ENCODE measurements at regions of chr10 and their contacts with region 1.

Region 1: GRCh38 chr10:13659897-13660550 is 73.3 kb downstream of the PRPF18 start:
- DNase-seq: peak; percentile 59
- H3K4me3 ChIP-seq: no peak overlapping the region
- H3K27ac ChIP-seq: peak overlapping the region; percentile 16
- H3K4me1 ChIP-seq: peaks cover 13% of the 10 kb centered on the region
- H3K27me3 ChIP-seq: no peaks in the 10 kb centered on the region
- CTCF ChIP-seq: peak; percentile 78 to 81
- POLR2A ChIP-seq: no peak

Region 2: DNA sequence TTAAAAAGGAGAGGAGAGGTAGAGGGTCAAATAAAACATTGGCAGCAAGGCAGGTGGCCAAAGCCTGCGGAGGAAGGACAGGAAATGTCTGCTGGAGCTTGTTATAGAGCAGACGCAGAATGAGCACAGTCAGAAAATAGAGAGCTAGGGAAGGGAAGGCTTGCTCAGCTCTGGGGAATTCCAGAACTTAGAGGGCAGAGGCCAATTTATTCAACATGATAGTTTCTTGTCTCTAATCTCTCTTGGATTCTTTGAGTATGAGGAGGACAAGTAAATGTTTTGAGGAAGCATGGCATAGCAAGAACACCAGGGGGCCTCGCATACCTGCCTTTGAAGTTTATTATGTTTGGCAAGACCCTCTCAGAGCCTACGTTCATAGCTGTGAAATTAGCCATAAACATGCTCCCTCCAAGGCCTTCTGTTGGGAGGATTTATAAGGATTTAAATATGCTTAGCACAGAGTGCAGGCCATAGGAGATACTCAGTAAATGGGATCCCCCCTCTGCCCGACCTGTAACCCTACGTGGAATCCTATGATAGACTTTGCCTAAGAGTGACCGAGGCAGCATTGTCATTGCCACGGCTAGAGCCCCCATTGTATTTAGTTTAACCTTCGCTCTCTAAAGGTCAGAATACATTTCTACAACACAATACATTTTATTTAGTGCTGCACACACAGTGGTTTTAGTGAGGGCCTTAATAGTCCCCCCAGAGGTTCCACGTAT is 952.4 kb before region 1 on chr10:
- CTCF ChIA-PET with region 1: no interaction called
- POLR2A ChIA-PET with region 1: no interaction called
- dilution Hi-C with region 1: no loop called
- intact Hi-C with region 1: no loop called
- DNase-seq: peak; percentile 99
- H3K4me3 ChIP-seq: no peak overlapping the region
- H3K27ac ChIP-seq: peak overlapping the region; percentile 85
- H3K4me1 ChIP-seq: peaks cover 63% of the 10 kb centered on the region
- H3K27me3 ChIP-seq: no peaks in the 10 kb centered on the region
- CTCF ChIP-seq: peak; percentile 66 to 71
- POLR2A ChIP-seq: peak; percentile 30

Region 3: GRCh38 chr10:13139150-13139549 is 520.9 kb before region 1 on chr10:
- CTCF ChIA-PET with region 1: no interaction called
- POLR2A ChIA-PET with region 1: no interaction called
- dilution Hi-C with region 1: no loop called
- intact Hi-C with region 1: no loop called
- DNase-seq: no peak
- H3K4me3 ChIP-seq: no peak overlapping the region
- H3K27ac ChIP-seq: no peak overlapping the region
- H3K4me1 ChIP-seq: no peaks in the 10 kb centered on the region
- H3K27me3 ChIP-seq: no peaks in the 10 kb centered on the region
- CTCF ChIP-seq: no peak
- POLR2A ChIP-seq: no peak

Region 4: DNA sequence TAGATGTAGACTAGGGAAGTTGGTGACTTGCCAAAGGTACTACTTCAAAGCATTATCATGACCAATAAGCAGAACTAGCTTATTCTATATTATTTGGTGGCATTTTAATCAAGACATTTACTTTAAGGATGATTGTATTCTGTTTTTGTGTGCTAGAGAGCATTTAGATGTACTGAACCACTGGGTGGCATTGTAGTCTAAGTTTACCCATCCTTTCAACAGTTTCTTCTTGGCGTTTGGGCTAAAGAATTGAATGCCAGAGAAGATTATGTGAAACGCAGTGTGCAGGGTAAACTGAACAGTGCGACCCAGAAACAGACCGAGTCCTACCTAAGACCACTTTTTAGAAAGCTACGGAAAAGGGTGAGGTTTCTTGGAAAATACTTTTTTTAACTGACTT is 46.5 kb before region 1 on chr10:
- CTCF ChIA-PET with region 1: interaction called, 3 read pairs
- POLR2A ChIA-PET with region 1: no interaction called
- dilution Hi-C with region 1: no loop called
- intact Hi-C with region 1: loop called (anchors 2 kb)
- DNase-seq: peak; percentile 60
- H3K4me3 ChIP-seq: no peak overlapping the region
- H3K27ac ChIP-seq: no peak overlapping the region
- H3K4me1 ChIP-seq: peaks cover 2% of the 10 kb centered on the region
- H3K27me3 ChIP-seq: no peaks in the 10 kb centered on the region
- CTCF ChIP-seq: peak; percentile 20 to 27
- POLR2A ChIP-seq: no peak

Region 5: GRCh38 chr10:13684252-13684791 is 24.3 kb after region 1 on chr10:
- CTCF ChIA-PET with region 1: interaction called, 7 read pairs
- POLR2A ChIA-PET with region 1: interaction called, 3 read pairs
- dilution Hi-C with region 1: no loop called
- intact Hi-C with region 1: loop called (anchors 1 kb)
- DNase-seq: peak; percentile 93
- H3K4me3 ChIP-seq: no peak overlapping the region
- H3K27ac ChIP-seq: peak overlapping the region; percentile 100
- H3K4me1 ChIP-seq: peaks cover 47% of the 10 kb centered on the region
- H3K27me3 ChIP-seq: no peaks in the 10 kb centered on the region
- CTCF ChIP-seq: no peak
- POLR2A ChIP-seq: no peak

Region 6: DNA sequence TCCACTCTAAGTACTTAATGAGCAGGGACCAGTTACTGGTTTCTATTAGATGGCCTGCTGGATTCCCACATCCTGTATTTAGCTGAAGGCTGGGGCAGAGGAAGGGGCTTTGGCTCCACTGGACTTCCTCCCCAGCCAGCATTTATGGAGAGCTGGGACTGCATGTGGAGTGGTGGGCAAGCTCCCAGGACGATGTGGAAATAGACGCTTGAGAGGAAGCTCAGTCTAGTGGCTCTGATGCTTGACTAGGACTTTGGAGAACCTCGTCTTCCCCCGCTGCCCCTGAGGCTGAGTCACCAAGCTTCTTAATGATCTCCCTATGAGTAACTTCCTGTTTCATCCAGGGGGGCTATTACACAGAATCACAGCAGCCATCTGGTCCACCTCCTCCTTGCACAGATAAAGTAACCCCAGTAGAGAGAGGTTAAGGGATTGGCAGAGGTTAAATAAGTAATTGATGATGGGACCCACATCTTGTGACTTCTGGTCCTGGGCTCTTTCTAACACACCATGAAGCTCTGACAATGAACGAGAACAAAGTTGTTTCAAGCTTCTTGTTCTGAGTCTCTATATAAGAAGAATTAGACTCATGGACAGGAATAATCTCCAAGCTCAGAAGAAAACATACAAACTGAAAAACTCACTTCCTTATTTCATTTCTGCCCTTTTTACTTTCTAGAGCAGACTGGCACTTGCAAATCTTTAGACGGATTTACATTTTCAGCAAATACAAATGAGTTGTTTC is 53.0 kb after region 1 on chr10:
- CTCF ChIA-PET with region 1: interaction called, 7 read pairs
- POLR2A ChIA-PET with region 1: no interaction called
- dilution Hi-C with region 1: no loop called
- intact Hi-C with region 1: loop called (anchors 2 kb)
- DNase-seq: peak; percentile 96
- H3K4me3 ChIP-seq: no peak overlapping the region
- H3K27ac ChIP-seq: peak overlapping the region; percentile 92
- H3K4me1 ChIP-seq: peaks cover 43% of the 10 kb centered on the region
- H3K27me3 ChIP-seq: no peaks in the 10 kb centered on the region
- CTCF ChIP-seq: no peak
- POLR2A ChIP-seq: peak; percentile 65

Region 7: GRCh38 chr10:13758312-13758711 is 98.3 kb after region 1 on chr10:
- CTCF ChIA-PET with region 1: interaction called, 4 read pairs
- POLR2A ChIA-PET with region 1: no interaction called
- dilution Hi-C with region 1: no loop called
- intact Hi-C with region 1: loop called (anchors 5 kb)
- DNase-seq: peak; percentile 77
- H3K4me3 ChIP-seq: no peak overlapping the region
- H3K27ac ChIP-seq: peak overlapping the region; percentile 85
- H3K4me1 ChIP-seq: peaks cover 36% of the 10 kb centered on the region
- H3K27me3 ChIP-seq: no peaks in the 10 kb centered on the region
- CTCF ChIP-seq: no peak
- POLR2A ChIP-seq: no peak

Region 8: DNA sequence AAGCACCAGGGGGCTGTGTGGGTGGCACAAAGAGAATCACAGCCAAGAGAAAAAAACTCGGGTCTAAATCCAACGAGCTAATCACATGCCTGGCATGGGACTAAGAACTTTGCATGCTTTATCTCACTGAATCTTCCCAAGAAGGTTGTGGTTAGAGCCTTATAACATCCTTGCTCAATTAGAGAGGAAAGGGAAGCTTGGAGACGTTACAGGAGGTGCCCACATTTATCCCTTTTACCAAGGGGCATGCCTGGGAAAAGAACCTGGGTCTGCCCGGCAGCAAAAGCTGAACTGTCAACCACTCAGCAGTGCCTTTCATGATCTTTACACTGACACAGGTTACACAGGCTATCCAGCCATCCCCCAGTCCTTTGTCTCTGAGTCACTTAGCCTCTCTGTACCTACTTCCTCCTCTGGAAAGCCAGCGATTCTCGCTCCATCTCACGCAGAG is 116.9 kb after region 1 on chr10:
- CTCF ChIA-PET with region 1: interaction called, 27 read pairs
- POLR2A ChIA-PET with region 1: no interaction called
- dilution Hi-C with region 1: no loop called
- intact Hi-C with region 1: loop called (anchors 1 kb)
- DNase-seq: no peak
- H3K4me3 ChIP-seq: no peak overlapping the region
- H3K27ac ChIP-seq: peak overlapping the region; percentile 76
- H3K4me1 ChIP-seq: peaks cover 46% of the 10 kb centered on the region
- H3K27me3 ChIP-seq: no peaks in the 10 kb centered on the region
- CTCF ChIP-seq: no peak
- POLR2A ChIP-seq: no peak

Measured in endothelial cell of umbilical vein (primary cell).